ENCODE measurements at regions of chr9 and their contacts with region 1.

Region 1: GRCh38 chr9:81689343-81690190 is at the start of gene TLE1:
- DNase-seq: peak; percentile 97
- ATAC-seq: peak; percentile 69
- H3K4me3 ChIP-seq: peak within 1 kb of the TSS; percentile 81
- H3K27ac ChIP-seq: peak within 1 kb of the TSS; percentile 81
- H3K4me1 ChIP-seq: peaks cover 24% of the 10 kb centered on the region
- H3K27me3 ChIP-seq: no peaks in the 10 kb centered on the region
- CTCF ChIP-seq: no peak
- total RNA-seq, gene TLE1: 49.0 and 55.6 TPM in 2 replicates

Region 2: DNA sequence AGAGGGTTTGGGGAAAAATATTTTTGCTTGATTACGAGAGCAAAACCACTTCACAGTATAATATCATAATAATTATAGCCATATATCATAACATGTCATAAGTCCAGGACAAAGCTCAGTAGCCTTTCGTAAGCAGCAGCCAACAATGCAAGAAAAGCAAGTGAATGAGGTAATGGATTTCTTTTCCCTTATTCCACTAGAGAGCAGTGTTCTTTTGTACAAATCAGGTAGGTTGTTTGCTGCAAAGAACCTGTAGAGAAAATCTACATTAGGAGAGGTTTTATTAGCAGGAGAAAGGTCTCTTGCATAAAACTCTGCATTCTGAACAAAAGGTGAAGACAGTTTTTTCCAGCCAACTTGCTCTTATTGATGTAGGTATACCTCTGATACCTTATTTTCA is 1084.4 kb before region 1 on chr9:
- CTCF ChIA-PET with region 1: no interaction called
- POLR2A ChIA-PET with region 1: no interaction called
- intact Hi-C with region 1: loop called (anchors 5 kb)
- DNase-seq: peak; percentile 49
- ATAC-seq: no peak
- H3K4me3 ChIP-seq: no peak overlapping the region
- H3K27ac ChIP-seq: no peak overlapping the region
- H3K4me1 ChIP-seq: no peaks in the 10 kb centered on the region
- H3K27me3 ChIP-seq: no peaks in the 10 kb centered on the region
- CTCF ChIP-seq: peak; percentile 53

Region 3: GRCh38 chr9:81083067-81083466 is 606.5 kb before region 1 on chr9:
- CTCF ChIA-PET with region 1: no interaction called
- POLR2A ChIA-PET with region 1: no interaction called
- intact Hi-C with region 1: loop called (anchors 5 kb)
- DNase-seq: peak; percentile 37
- ATAC-seq: peak; percentile 24; the same call in 1 of the 2 replicates
- H3K4me3 ChIP-seq: no peak overlapping the region
- H3K27ac ChIP-seq: peak overlapping the region; percentile 52
- H3K4me1 ChIP-seq: peaks cover 23% of the 10 kb centered on the region
- H3K27me3 ChIP-seq: no peaks in the 10 kb centered on the region
- CTCF ChIP-seq: no peak; the same call in 1 of the 2 replicates

Region 4: GRCh38 chr9:81410197-81410596 is 279.4 kb before region 1 on chr9:
- CTCF ChIA-PET with region 1: no interaction called
- POLR2A ChIA-PET with region 1: no interaction called
- intact Hi-C with region 1: loop called (anchors 2 kb)
- DNase-seq: peak; percentile 90
- ATAC-seq: peak; percentile 67
- H3K4me3 ChIP-seq: peak overlapping the region; percentile 26; the same call in 1 of the 2 replicates
- H3K27ac ChIP-seq: peak overlapping the region; percentile 82
- H3K4me1 ChIP-seq: peaks cover 52% of the 10 kb centered on the region
- H3K27me3 ChIP-seq: no peaks in the 10 kb centered on the region
- CTCF ChIP-seq: no peak

Region 5: DNA sequence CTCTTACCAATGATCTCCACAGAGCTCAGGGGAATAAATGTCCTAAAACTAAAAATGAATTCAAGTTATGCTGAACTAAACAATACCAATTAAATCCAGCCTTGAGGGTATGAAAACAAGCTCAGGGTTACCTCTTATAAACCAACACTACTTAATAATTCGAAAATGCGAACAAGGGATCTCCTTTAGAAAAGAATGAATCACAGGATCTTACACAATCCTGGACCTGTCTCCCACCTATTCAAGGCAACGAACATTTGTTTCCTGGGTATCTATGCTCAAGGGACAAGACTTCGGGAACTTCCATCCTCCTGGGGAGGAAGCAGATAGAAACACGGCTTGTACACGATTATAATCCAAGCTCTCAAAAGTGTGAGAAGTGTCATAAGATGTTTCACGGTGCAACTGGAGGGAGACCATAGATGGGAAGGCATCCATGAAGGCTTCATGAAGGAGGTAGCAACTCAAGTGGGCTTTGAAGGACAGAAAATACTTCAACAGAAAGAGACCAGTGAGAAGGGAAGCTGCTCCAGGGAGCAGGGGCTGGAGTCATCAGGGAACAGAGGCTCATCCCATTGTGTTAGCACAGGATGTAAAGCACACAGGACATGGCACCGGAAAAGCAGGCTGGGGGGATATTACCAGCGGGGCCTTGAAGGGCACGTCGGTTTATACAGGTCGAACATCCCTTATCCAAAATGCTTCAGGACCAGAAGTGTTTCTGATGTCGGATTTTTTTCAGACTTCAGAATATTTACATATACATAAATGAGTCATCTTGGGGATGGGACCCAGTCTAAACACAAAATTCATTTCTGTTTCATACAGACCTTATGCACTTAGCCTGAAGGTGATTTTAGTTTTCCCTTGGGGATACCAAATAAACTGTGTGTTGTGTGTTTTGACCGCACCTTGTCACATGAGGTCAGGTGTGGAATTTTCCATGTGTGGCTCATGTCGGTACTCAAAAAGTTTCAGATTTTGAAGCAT is 87.6 kb before region 1 on chr9:
- CTCF ChIA-PET with region 1: no interaction called
- POLR2A ChIA-PET with region 1: no interaction called
- intact Hi-C with region 1: loop called (anchors 5 kb)
- DNase-seq: peak; percentile 60
- ATAC-seq: peak; percentile 73
- H3K4me3 ChIP-seq: peak overlapping the region; percentile 28; the same call in 1 of the 2 replicates
- H3K27ac ChIP-seq: peak overlapping the region; percentile 85
- H3K4me1 ChIP-seq: peaks cover 36% of the 10 kb centered on the region
- H3K27me3 ChIP-seq: no peaks in the 10 kb centered on the region
- CTCF ChIP-seq: no peak

Region 6: DNA sequence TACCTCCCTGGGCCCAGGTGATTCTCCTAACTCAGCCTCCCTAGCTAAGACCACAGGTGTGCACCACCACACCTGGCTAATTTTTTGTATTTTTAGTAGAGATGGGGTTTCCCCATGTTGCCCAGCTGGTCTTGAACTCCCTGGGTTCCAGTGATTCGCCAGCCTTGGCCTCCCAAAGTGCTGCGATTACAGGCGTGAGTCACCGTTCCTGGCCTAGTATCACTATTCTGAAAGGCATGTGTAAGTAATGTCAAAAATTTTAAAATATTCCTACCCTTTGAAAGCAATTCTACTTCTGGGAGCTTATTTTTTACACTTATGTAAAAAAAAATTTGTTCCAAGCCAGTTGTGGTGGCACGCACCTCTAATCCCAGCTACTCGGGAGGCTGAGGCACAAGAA is 26.8 kb after region 1 on chr9:
- CTCF ChIA-PET with region 1: no interaction called
- POLR2A ChIA-PET with region 1: no interaction called
- intact Hi-C with region 1: loop called (anchors 1 kb)
- DNase-seq: peak; percentile 49
- ATAC-seq: no peak
- H3K4me3 ChIP-seq: no peak overlapping the region
- H3K27ac ChIP-seq: peak overlapping the region; percentile 83
- H3K4me1 ChIP-seq: peaks cover 36% of the 10 kb centered on the region
- H3K27me3 ChIP-seq: no peaks in the 10 kb centered on the region
- CTCF ChIP-seq: no peak

Region 7: GRCh38 chr9:82606492-82607382 is 917.2 kb after region 1 on chr9:
- CTCF ChIA-PET with region 1: no interaction called
- POLR2A ChIA-PET with region 1: interaction called, 4 read pairs
- intact Hi-C with region 1: loop called (anchors 10 kb)
- DNase-seq: peak; percentile 77
- ATAC-seq: peak; percentile 54
- H3K4me3 ChIP-seq: peak overlapping the region; percentile 43; the same call in 1 of the 2 replicates
- H3K27ac ChIP-seq: no peak overlapping the region
- H3K4me1 ChIP-seq: peaks cover 3% of the 10 kb centered on the region; the same call in 1 of the 2 replicates
- H3K27me3 ChIP-seq: no peaks in the 10 kb centered on the region
- CTCF ChIP-seq: peak; percentile 74